ENCODE measurements at regions of chr15 and their contacts with region 1.

Region 1: DNA sequence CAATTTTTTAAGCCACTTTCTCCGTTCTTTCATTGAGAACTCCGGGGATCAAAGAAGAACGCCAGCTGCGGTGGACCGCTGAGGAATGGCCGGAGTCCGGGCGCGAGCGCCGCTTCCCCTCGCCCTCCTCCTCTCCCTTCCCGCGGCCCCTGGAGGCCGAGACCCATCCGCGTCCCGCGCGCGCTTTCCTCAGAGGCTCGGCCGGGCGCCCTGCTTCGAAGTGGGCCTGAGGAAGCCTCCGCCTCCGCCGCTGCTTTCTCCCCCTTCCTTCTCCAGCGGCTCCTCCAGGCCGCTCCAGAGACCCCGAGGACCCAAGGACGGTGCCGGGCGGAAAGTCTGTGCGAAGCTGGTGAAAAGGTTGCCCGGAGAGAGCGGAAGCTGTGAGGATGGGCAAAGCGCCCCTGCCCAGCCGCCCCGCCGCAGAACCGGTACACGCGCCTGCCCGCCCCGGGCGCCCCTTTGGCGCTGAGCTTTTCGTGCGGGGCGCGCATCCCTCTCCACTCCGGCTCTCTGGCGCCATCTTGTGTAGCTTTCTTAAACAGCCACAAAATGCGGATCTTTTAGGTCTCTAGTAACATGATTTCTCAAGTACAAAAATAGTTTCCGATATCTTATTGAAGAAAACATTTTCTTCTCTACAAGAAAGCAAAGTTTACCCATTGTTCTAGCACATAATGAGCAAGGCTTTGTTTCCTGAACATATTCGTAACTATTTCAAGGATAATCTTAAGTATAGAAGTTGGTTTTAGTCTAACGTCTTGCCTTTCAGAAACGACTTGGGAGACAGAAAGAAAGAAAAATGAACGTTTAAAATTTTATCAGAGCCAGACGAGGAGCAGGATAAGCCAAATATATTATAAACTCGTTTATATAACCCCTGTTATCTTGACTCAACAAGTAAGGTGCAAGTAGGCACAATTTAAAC is 59.2 kb upstream of the FAM174B start:
- DNase-seq: peak; percentile 82
- H3K4me3 Mint-ChIP-seq: peak overlapping the region; percentile 67
- H3K27ac Mint-ChIP-seq: no peak overlapping the region
- H3K4me1 Mint-ChIP-seq: peaks cover 9% of the 10 kb centered on the region
- H3K27me3 Mint-ChIP-seq: peaks cover 36% of the 10 kb centered on the region

Region 2: DNA sequence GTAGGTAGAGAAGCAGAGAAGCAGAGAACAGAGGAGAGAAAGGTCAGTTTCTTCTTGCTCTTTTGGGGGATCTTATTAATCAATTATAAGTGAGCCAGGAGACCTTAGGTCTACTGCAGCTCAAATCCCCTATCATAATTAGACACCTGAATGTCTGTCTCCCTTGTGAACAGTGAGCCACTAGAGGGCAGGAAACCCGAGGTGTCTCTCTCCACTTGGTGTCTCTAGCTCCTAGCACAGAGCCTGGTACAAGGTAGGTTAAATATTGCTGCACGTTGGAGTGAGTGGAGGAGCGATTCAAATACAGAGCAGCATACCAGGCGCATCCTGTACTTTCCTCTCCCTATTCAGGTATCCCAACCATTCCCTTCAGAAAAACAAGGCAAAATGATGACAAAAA is 323.1 kb before region 1 on chr15:
- CTCF ChIA-PET with region 1: interaction called, 11 read pairs
- DNase-seq: peak; percentile 40
- H3K4me3 Mint-ChIP-seq: no peak overlapping the region
- H3K27ac Mint-ChIP-seq: no peak overlapping the region
- H3K4me1 Mint-ChIP-seq: peaks cover 7% of the 10 kb centered on the region
- H3K27me3 Mint-ChIP-seq: peaks cover 91% of the 10 kb centered on the region

Region 3: DNA sequence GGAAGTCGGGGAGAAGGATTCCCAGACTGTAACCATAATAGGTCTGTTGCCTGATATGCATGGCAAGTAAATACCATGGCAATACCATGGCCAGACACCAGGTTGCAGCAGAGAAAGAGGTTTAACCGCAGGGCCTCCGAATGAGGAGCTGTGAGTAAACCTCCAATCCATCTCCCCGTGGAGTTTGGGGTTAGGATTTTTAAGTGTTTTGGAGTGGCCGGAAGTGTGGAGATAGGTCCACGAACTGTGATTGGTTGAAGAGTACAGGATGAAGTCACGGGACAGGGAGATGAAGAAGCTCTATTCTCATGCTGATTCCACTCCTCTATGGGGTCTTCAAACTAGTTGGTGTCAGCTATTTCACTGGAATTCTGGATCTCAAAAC is 193.1 kb before region 1 on chr15:
- CTCF ChIA-PET with region 1: interaction called, 37 read pairs
- DNase-seq: peak; percentile 69
- H3K4me3 Mint-ChIP-seq: no peak overlapping the region
- H3K27ac Mint-ChIP-seq: no peak overlapping the region
- H3K4me1 Mint-ChIP-seq: no peaks in the 10 kb centered on the region
- H3K27me3 Mint-ChIP-seq: peaks cover 14% of the 10 kb centered on the region

Measured in activated naive CD4-positive, alpha-beta T cell treated with anti-CD3 and anti-CD28 coated beads, Interleukin-2, amount 10 ng/mL, durations not matched to agents 7 days and 5 days (primary cell).